Left colon (tissue), 2 donors: ENCODE measurements at regions of chr15 and their contacts with region 1.

Region 1: GRCh38 chr15:84961114-84961452 is 20.6 kb upstream of the PDE8A start:
- DNase-seq: no peak
- ATAC-seq: no peak

Region 2: GRCh38 chr15:85063126-85064079 is 102.3 kb after region 1 on chr15:
- intact Hi-C with region 1: loop called in 1 of 2 experiments (anchors 5 kb)
- DNase-seq: no peak
- ATAC-seq: no peak